ENCODE measurements at regions of chr20 and their contacts with region 1.

Region 1: DNA sequence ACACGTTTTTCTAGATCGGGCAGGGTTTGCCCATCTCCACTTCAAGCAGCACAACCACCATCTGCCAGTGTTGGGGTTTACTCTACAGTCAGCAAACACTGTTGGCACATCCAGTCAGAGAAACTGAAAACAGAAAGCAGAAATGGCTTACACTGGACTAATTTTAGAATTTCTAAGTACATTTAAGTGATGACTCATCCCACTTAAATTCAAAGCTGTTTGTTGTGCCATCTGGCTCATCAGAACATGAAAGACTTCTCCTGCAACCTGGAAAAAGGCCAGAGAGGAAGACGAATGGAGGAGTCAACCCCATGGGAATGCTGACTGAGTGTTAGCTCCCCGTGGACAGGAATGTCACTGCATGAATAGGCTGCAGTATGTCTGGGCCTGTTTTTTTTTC is 21.8 kb downstream of the FAM209B start:
- DNase-seq: no peak
- H3K4me3 ChIP-seq: no peak overlapping the region
- H3K27ac ChIP-seq: peak overlapping the region; percentile 40
- H3K4me1 ChIP-seq: peaks cover 19% of the 10 kb centered on the region
- H3K27me3 ChIP-seq: no peaks in the 10 kb centered on the region
- CTCF ChIP-seq: peak in 1 of 3 experiments; percentile 11
- POLR2A ChIP-seq: no peak

Region 2: GRCh38 chr20:57061058-57061900 is 506.4 kb after region 1 on chr20:
- intact Hi-C with region 1: loop called (anchors 10 kb)
- DNase-seq: no peak
- H3K4me3 ChIP-seq: no peak overlapping the region
- H3K27ac ChIP-seq: no peak overlapping the region
- H3K4me1 ChIP-seq: peaks cover 7% of the 10 kb centered on the region
- H3K27me3 ChIP-seq: no peaks in the 10 kb centered on the region
- CTCF ChIP-seq: peak in 1 of 3 experiments; percentile 38
- POLR2A ChIP-seq: no peak

Region 3: DNA sequence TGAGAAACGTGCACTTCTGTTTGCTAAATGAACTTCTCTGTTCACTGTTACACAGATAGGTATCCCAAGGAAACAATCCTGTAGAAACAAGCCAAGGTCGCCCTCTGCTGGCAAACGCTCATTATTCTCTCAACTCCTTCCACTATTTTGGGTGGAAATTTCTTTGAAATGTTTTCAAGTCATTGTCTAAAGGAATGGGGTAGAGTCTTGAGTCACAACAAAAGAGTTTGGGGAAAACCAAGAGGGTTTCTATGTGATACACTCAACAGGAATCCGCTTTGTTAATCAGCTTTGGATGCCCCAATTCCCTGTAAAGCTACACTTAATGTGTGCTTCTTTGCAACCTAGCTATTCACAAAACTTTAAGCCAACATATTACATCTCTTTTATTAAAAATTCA is 791.6 kb after region 1 on chr20:
- intact Hi-C with region 1: loop called (anchors 10 kb)
- DNase-seq: no peak
- H3K4me3 ChIP-seq: no peak overlapping the region
- H3K27ac ChIP-seq: no peak overlapping the region
- H3K4me1 ChIP-seq: no peaks in the 10 kb centered on the region
- H3K27me3 ChIP-seq: no peaks in the 10 kb centered on the region
- CTCF ChIP-seq: peak; percentile 43 to 82 (median 58)
- POLR2A ChIP-seq: no peak

Measured in vagina (tissue), 2 donors.